ENCODE measurements at regions of chr1 and their contacts with region 1.

Region 1: GRCh38 chr1:153633716-153634665 is at the start of gene CHTOP:
- DNase-seq: peak; percentile 98
- ATAC-seq: peak; percentile 93
- H3K4me3 Mint-ChIP-seq: peak within 1 kb of the TSS; percentile 98
- H3K27ac Mint-ChIP-seq: peak within 1 kb of the TSS; percentile 98
- H3K4me1 Mint-ChIP-seq: peaks cover 50% of the 10 kb centered on the region
- H3K27me3 Mint-ChIP-seq: no peaks in the 10 kb centered on the region
- total RNA-seq, gene CHTOP: 85.1 to 91.4 TPM

Region 2: GRCh38 chr1:152034646-152035405 is 1599.2 kb before region 1 on chr1:
- CTCF ChIA-PET with region 1: no interaction called
- POLR2A ChIA-PET with region 1: no interaction called
- intact Hi-C with region 1: loop called in 1 of 2 experiments (anchors 2 kb)
- DNase-seq: peak; percentile 82
- ATAC-seq: peak; percentile 64
- H3K4me3 Mint-ChIP-seq: peak overlapping the region; percentile 82
- H3K27ac Mint-ChIP-seq: peak overlapping the region; percentile 90
- H3K4me1 Mint-ChIP-seq: peaks cover 41% of the 10 kb centered on the region
- H3K27me3 Mint-ChIP-seq: no peaks in the 10 kb centered on the region

Region 3: GRCh38 chr1:153532769-153533599 is 101.0 kb before region 1 on chr1:
- CTCF ChIA-PET with region 1: interaction called, 18 read pairs
- POLR2A ChIA-PET with region 1: interaction called, 8 read pairs
- intact Hi-C with region 1: loop called in 1 of 2 experiments (anchors 1 kb)
- DNase-seq: peak; percentile 91
- ATAC-seq: peak; percentile 31
- H3K4me3 Mint-ChIP-seq: peak overlapping the region; percentile 89
- H3K27ac Mint-ChIP-seq: peak overlapping the region; percentile 94
- H3K4me1 Mint-ChIP-seq: peaks cover 58% of the 10 kb centered on the region
- H3K27me3 Mint-ChIP-seq: no peaks in the 10 kb centered on the region

Region 4: DNA sequence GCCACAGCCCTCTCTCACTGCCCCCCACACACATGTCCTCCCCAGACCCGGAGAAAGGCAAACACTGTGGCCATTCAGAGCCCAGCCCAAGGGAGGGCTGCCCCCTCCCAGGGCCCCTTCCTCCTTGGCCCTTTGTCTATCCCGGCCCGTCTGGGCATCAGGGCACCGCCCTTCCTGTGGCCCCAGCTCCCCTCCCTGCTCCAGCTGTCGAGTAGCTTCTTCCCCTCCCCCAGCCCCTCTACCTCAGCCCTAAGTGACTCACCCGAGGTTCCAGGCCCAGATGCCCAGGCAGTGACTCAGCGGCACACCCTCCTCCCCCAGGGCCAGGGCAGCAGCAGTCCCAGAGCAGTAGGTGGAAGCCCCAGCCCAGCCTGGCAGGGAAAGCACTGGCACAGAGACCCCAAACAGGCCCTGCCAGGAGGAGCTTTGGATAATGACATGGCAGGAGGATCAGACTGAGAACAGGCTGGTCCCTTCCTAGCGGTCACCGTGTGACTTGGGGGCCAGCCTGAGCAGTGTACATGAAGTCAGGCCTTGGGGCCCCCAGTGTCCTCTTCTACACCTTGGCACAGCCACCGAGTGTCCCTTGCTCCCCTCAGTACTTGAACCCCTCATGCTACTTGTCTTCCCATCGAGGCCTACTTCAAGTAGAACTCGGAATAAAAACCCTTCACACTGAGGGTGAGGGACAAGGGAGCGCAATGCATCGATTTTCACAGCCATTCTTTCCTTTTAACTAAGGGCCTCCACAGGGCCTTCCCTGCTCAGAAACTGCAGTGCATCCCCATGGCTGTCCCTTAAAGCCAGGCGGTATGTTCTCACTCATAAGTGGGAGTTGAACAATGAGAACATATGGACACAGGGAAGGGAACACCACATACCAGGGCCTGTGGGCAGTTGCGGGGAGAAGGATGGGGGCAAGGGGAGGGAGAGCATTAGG is 67.3 kb before region 1 on chr1:
- CTCF ChIA-PET with region 1: interaction called, 10 read pairs
- POLR2A ChIA-PET with region 1: interaction called, 5 read pairs
- intact Hi-C with region 1: loop called in 1 of 2 experiments (anchors 1 kb)
- DNase-seq: peak; percentile 95
- ATAC-seq: peak; percentile 84
- H3K4me3 Mint-ChIP-seq: peak overlapping the region; percentile 71
- H3K27ac Mint-ChIP-seq: peak overlapping the region; percentile 100
- H3K4me1 Mint-ChIP-seq: peaks cover 52% of the 10 kb centered on the region
- H3K27me3 Mint-ChIP-seq: no peaks in the 10 kb centered on the region

Region 5: DNA sequence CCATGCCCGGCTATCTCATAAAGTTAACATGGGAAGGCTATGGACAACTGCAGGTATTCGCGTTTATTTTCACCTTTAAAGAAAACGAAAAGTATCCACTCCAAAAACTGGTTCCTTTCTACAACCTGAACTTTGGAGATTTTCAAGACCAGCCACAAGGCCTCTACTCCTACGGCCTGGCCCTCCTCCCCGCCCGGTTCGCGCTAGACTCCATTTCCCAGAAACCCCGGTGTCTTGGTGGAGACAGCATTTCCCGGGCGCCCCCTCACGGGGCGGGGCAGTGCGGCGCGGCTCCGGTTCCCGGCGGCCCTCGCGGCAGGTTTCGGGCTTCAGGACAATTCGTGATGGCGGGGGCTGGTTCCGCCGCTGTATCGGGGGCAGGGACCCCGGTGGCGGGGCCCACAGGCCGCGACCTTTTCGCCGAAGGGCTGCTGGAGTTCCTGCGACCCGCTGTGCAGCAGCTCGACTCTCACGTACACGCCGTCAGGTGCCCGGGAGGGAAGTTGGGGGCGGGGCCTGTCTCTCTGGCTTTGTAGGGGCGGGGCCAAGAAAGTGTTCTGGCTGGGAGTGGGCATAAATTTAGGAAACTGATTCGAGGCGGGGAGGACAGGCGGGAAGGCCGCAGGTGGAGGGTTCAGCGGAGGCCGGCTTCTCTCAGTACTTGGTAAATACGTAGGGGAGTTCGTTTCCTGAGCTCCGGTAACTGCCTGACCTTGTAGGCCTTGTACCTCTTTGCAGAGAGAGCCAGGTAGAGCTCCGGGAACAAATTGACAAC is 24.6 kb after region 1 on chr1 and contains the start of gene SNAPIN:
- CTCF ChIA-PET with region 1: interaction called, 3 read pairs
- POLR2A ChIA-PET with region 1: interaction called, 9 read pairs
- intact Hi-C with region 1: loop called (anchors 1 kb)
- DNase-seq: peak; percentile 96
- ATAC-seq: peak; percentile 96
- H3K4me3 Mint-ChIP-seq: peak within 1 kb of the TSS; percentile 95
- H3K27ac Mint-ChIP-seq: peak within 1 kb of the TSS; percentile 90
- H3K4me1 Mint-ChIP-seq: peaks cover 13% of the 10 kb centered on the region
- H3K27me3 Mint-ChIP-seq: no peaks in the 10 kb centered on the region
- total RNA-seq, gene SNAPIN: 34.2 to 38.4 TPM

Region 6: DNA sequence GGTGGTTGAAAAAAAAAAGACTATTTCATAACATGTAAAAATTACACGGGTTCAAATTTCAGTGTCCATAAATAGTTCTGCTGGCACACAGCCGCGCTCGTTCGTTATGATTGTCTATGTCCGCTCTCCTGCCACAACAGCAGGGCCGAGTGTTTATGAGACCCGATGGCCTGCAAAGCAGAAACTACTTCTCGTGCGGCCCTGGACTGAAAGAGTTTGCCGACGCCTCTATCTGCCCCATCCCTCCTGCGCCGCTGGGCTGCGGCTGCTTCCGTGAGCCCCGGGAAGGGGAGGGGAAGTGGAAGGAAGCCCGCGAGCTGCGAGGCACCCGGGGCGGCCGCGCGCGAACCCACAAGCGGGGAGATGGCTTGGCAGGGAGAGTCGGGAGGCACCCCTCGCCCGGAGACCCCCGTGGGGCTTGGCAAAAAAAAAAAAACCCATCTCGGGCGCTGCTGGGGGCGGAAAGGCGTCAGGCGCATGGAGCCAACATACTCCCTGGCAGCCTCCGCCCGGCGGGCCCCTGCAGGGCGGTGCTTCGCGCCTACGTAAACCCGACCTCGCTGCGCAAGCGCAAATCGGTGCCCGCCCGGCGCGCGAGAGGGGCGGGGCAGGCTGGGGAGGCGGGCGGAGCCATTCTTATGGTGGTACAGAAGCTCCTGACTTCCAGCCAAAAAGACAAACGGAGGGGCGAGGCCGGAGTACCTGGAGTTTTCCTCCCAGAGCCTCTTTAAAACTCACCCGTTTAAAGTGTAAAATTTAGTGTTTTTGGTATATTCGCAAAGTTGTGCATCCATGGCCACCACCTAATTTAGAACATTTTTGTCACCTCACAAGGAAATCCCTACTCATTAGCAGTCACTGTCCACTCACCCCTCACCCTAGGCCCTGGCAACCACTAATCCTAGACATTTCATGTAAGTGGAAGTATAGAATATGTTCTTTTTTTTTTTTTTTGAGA is 149.5 kb after region 1 on chr1:
- CTCF ChIA-PET with region 1: no interaction called
- POLR2A ChIA-PET with region 1: no interaction called
- intact Hi-C with region 1: loop called in 1 of 2 experiments (anchors 1 kb)
- DNase-seq: peak; percentile 95
- ATAC-seq: peak; percentile 96
- H3K4me3 Mint-ChIP-seq: peak overlapping the region; percentile 90
- H3K27ac Mint-ChIP-seq: peak overlapping the region; percentile 97
- H3K4me1 Mint-ChIP-seq: peaks cover 12% of the 10 kb centered on the region
- H3K27me3 Mint-ChIP-seq: no peaks in the 10 kb centered on the region